A673 (cell line): ENCODE measurements at regions of chr2 and their contacts with region 1.

Region 1: GRCh38 chr2:145546091-145546490 is 1026.2 kb upstream of the ZEB2 start:
- DNase-seq: peak; percentile 36
- H3K4me3 ChIP-seq: no peak overlapping the region
- H3K27ac ChIP-seq: peak overlapping the region; percentile 98
- H3K4me1 ChIP-seq: peaks cover 25% of the 10 kb centered on the region
- H3K27me3 ChIP-seq: no peaks in the 10 kb centered on the region
- CTCF ChIP-seq: peak; percentile 22; the same call in 1 of the 2 replicates

Region 2: DNA sequence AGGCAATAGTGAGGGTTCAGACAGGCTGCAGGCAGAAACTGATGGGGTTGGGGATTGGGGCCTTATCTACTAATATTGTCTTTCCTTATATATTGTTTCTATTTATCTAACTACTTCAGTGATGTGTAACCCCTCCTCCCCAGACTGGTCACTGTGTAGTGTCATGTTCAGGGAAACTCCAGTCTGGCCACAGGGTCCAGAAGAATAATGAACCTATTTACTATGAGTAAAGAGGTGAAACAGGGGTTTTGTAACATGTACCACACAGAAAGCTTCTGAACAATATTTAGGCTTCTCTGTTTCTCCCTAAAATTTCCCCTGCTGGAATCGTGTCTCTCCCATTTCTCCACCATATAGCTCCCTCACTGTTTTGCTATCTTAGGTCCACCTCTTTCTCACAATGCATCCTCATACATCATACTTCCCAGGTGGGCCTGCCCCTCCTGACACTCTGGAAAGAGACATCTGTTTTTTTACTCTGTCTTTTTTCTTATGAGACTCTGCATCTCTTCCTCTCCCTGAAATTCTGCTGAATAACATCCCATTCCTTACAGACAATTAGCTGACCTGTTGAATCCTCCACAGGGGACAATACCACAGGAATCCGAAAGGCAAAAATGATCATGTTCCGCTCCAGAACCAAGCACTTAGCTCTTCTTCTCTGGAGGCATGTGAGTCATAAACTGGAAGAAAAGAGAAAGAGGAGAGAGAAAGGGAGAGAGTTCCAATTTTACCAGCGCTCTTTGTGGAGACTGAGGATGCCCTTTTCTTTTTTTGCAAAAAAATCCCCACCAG is 1181.0 kb before region 1 on chr2:
- CTCF ChIA-PET with region 1: no interaction called
- POLR2A ChIA-PET with region 1: no interaction called
- intact Hi-C with region 1: loop called (anchors 10 kb)
- DNase-seq: peak; percentile 58
- H3K4me3 ChIP-seq: no peak overlapping the region
- H3K27ac ChIP-seq: peak overlapping the region; percentile 33
- H3K4me1 ChIP-seq: peaks cover 20% of the 10 kb centered on the region
- H3K27me3 ChIP-seq: no peaks in the 10 kb centered on the region
- CTCF ChIP-seq: no peak

Region 3: DNA sequence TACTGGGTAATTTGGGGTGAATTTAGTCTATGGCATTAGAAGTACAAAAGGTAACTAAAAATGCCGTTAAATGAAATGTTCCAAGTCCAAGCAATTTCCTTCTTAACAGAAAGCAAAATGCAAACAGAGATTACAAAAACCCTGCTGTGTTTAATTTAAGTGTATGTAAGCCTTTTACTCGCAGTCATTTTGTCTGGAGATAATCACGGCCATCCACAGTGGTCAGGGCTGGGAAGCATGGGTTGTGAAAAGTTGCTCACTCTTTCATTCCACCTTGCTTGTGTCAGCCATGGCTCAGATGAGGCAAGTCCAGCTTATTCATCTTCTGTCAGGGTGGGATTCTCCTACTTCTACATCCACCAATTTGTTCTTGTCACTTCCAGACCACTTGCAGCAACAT is 42.6 kb before region 1 on chr2:
- CTCF ChIA-PET with region 1: no interaction called
- POLR2A ChIA-PET with region 1: no interaction called
- intact Hi-C with region 1: no loop called
- DNase-seq: peak; percentile 70
- H3K4me3 ChIP-seq: no peak overlapping the region
- H3K27ac ChIP-seq: no peak overlapping the region
- H3K4me1 ChIP-seq: peaks cover 8% of the 10 kb centered on the region
- H3K27me3 ChIP-seq: no peaks in the 10 kb centered on the region
- CTCF ChIP-seq: no peak

Region 4: GRCh38 chr2:145752091-145752806 is 206.2 kb after region 1 on chr2:
- CTCF ChIA-PET with region 1: interaction called, 5 read pairs
- POLR2A ChIA-PET with region 1: no interaction called
- intact Hi-C with region 1: loop called (anchors 1 kb)
- DNase-seq: peak; percentile 94
- H3K4me3 ChIP-seq: no peak overlapping the region
- H3K27ac ChIP-seq: peak overlapping the region; percentile 87
- H3K4me1 ChIP-seq: peaks cover 47% of the 10 kb centered on the region
- H3K27me3 ChIP-seq: no peaks in the 10 kb centered on the region
- CTCF ChIP-seq: peak; percentile 82

Region 5: GRCh38 chr2:146523196-146523595 is 977.1 kb after region 1 on chr2:
- CTCF ChIA-PET with region 1: no interaction called
- POLR2A ChIA-PET with region 1: no interaction called
- intact Hi-C with region 1: loop called (anchors 5 kb)
- DNase-seq: peak; percentile 67
- H3K4me3 ChIP-seq: no peak overlapping the region
- H3K27ac ChIP-seq: no peak overlapping the region
- H3K4me1 ChIP-seq: peaks cover 10% of the 10 kb centered on the region
- H3K27me3 ChIP-seq: no peaks in the 10 kb centered on the region
- CTCF ChIP-seq: peak; percentile 58